Left ventricle myocardium inferior (tissue), 1 donor: ENCODE measurements at regions of chr9 and their contacts with region 1.

Region 1: GRCh38 chr9:114155263-114155972 is at the start of gene COL27A1:
- DNase-seq: peak; percentile 85
- H3K4me3 ChIP-seq: peak within 1 kb of the TSS; percentile 80
- H3K27ac ChIP-seq: peak within 1 kb of the TSS; percentile 78
- H3K4me1 ChIP-seq: peaks cover 45% of the 10 kb centered on the region
- H3K27me3 ChIP-seq: peaks cover 26% of the 10 kb centered on the region
- CTCF ChIP-seq: peak; percentile 94
- total RNA-seq, gene COL27A1: 6.4 TPM

Region 2: DNA sequence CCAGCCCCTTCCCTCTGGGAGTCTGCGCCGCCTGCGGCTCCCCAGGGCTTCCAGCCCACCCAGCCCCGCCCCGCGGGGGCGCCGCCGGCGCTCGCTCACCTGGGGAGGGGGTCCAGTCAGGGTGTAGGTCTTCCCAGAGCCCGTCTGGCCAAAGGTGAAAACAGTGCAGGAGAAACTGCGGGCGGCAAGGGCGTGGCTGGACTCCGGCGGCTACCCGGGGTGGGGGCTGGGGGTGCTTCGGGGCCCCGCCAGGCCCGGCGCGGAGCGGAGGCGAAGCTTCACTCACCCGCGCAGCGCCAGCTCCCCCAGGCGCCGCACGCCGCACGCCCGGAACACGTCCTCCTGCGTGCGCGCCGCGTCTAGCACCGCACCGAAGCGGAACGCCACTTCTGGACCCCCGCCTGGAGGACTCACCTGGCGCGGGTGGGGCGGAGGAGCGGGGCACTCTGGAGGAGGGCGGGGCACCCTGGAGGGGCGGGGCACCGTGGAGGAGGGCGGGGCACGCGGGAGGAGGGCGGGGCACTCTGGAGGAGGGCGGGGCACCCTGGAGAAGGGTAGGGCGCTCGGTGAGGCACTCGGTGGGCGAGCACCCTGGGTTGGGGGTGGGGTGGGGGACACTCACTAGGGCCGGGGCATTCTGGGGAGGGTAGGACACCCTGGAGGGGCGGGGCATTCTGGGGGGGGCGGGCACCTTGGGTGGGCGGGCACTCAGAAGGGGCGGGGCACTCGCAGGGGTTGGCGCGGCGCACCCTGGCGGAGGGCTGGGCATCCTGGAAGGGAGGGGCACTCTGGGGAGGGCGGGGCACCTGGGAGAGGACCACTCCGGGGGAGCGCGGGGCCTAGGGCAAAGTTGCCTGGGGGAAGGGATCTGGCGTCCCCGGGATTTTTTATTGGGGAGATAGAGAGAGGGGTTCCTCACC is 57.1 kb before region 1 on chr9:
- intact Hi-C with region 1: no loop called
- DNase-seq: no peak
- H3K4me3 ChIP-seq: peak overlapping the region; percentile 67
- H3K27ac ChIP-seq: no peak overlapping the region
- H3K4me1 ChIP-seq: peaks cover 15% of the 10 kb centered on the region
- H3K27me3 ChIP-seq: peaks cover 56% of the 10 kb centered on the region
- CTCF ChIP-seq: no peak

Region 3: GRCh38 chr9:114224247-114224610 is 68.8 kb after region 1 on chr9:
- intact Hi-C with region 1: loop called (anchors 10 kb)
- DNase-seq: no peak
- H3K4me3 ChIP-seq: no peak overlapping the region
- H3K27ac ChIP-seq: peak overlapping the region; percentile 42
- H3K4me1 ChIP-seq: peaks cover 30% of the 10 kb centered on the region
- H3K27me3 ChIP-seq: no peaks in the 10 kb centered on the region
- CTCF ChIP-seq: no peak

Region 4: DNA sequence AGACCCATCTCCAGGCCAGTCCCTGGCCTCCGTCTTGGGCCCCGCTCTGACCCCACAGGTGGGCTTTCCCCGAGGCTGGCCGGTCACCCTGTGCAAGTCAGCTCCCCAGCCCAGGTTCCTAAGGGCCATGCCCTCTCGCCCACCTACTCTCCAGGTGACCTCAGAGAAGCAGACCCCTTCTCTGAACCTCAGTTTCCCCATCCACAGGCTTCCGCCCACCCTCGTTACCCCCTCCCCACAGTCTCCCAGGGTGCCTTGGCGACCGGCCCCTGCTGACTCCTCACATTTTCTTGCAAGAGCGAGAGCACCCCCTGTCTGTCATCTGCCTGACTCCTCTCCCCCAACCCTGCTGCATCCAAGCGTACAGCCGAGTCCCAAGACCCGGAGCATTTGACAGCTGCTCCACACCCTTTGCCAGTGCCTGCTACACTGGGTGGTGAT is 116.2 kb after region 1 on chr9:
- intact Hi-C with region 1: loop called (anchors 10 kb)
- DNase-seq: peak; percentile 48
- H3K4me3 ChIP-seq: no peak overlapping the region
- H3K27ac ChIP-seq: no peak overlapping the region
- H3K4me1 ChIP-seq: no peaks in the 10 kb centered on the region
- H3K27me3 ChIP-seq: no peaks in the 10 kb centered on the region
- CTCF ChIP-seq: peak; percentile 67

Region 5: DNA sequence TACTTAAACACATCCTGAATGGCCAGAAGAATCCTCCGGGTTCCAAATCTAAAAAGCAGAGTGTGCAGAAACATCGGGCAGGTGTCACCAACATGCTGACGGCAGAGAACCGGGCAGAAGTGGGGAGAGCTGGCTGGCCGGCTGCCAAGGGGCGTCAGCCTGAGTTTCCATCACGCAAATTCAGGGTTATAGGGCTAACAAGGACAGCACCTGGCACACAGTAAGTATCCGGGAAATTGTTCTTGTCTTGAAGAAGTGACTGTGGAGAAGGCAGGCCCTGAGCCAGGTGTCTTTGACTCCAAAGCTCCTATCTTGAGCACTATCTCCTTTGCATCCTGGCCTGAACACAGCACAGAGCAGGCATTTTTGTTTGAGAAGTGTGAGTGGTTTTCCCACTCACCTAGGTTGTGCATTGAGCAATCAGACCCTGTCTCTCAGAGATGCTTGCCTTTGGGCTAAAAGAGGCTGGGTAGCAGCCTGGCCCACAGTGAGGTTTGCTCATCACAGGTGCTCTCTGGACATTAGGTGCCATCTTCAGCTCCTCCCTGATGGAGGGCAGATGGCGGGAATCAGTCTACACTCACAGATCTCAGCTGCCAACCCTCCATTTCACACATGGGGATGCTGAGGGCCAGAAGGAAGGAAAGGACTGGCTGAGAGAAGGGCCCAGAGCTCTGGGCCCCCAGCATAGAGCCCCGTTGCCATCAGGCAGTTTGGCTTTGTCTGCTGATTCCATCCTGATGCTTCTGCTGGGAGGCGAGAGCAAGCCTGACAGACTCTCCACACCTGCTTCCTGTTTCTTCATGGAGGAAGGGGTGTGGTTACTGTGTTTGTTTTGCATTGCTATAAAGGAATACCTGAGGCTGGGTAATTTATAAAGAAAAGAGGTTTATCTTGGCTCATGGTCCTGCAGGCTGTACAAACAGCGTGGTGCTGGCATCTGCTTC is 297.1 kb after region 1 on chr9:
- intact Hi-C with region 1: no loop called
- DNase-seq: no peak
- H3K4me3 ChIP-seq: no peak overlapping the region
- H3K27ac ChIP-seq: no peak overlapping the region
- H3K4me1 ChIP-seq: no peaks in the 10 kb centered on the region
- H3K27me3 ChIP-seq: peaks cover 33% of the 10 kb centered on the region
- CTCF ChIP-seq: no peak